B cell (primary cell): ENCODE measurements at regions of chr12 and their contacts with region 1.

Region 1: DNA sequence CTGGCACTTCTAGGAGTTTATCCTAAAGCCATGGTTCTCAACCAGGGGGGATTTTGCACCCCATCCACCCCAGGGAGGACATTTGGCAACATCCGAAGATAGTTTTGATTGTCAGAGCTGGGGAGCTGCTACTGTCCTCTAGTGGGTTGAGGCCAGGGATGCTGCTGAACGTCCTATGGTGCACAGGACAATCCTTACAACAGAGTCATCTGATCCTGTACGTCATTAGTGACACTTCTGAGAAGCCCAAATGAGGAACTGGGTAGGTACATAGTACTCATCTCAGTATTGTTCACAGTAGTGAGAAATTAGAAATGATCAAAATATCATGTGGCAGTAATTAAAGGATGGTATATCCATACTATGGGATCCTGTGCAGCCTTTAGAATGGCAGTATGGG is 185.1 kb downstream of the CHST11 start:
- DNase-seq: peak; percentile 86
- ATAC-seq: peak; percentile 79
- H3K4me3 ChIP-seq: no peak overlapping the region
- H3K4me3 Mint-ChIP-seq: peak overlapping the region; percentile 42
- H3K27ac ChIP-seq: peak overlapping the region; percentile 88 to 96
- H3K27ac Mint-ChIP-seq: peak overlapping the region; percentile 91
- H3K4me1 ChIP-seq: peaks cover 43 to 57% of the 10 kb centered on the region in 2 donors
- H3K4me1 Mint-ChIP-seq: peaks cover 84% of the 10 kb centered on the region
- H3K27me3 ChIP-seq: no peaks in the 10 kb centered on the region
- H3K27me3 Mint-ChIP-seq: no peaks in the 10 kb centered on the region
- CTCF ChIP-seq: peak; percentile 57

Region 2: DNA sequence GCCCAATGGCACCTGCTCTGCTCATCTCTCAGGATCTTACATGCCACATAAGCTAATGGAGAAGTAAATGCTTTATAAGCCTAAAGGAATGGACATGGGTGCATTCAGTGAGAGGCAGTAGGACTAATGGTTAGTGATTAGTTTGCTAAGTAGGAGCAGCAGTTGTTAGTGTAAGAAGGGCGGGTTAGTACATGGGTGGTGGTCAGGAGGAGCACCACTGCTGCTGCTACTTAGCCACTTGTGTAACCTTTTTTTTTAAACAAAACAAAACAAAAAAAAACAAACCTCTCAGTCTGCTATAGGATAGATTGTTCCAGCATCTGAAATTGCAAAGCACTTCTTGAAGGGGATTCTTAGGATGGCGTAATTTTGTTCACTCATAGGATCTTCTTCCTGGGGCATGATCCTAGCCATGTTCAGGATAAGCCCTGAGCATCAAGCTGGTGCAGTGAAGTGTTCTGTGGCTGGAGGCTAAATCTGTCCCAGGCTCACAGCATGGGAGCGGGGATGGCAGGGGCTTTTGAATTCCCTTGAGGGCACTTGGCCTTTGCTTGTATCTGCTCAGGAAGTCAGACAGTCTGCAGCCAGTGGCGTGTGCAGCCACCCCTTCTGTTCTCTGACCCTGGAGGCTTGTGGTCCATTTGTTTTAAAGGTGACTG is 121.5 kb before region 1 on chr12:
- CTCF ChIA-PET with region 1: no interaction called
- POLR2A ChIA-PET with region 1: interaction called, 4 read pairs
- intact Hi-C with region 1: loop called (anchors 2 kb)
- DNase-seq: peak; percentile 80
- ATAC-seq: peak; percentile 80
- H3K4me3 ChIP-seq: peak overlapping the region in 3 of 5 experiments; percentile 5 to 40 (median 12)
- H3K4me3 Mint-ChIP-seq: peak overlapping the region; percentile 62
- H3K27ac ChIP-seq: peak overlapping the region; percentile 8 to 64
- H3K27ac Mint-ChIP-seq: peak overlapping the region; percentile 85
- H3K4me1 ChIP-seq: peaks cover 75% of the 10 kb centered on the region in 2 donors
- H3K4me1 Mint-ChIP-seq: peaks cover 92% of the 10 kb centered on the region
- H3K27me3 ChIP-seq: no peaks in the 10 kb centered on the region
- H3K27me3 Mint-ChIP-seq: no peaks in the 10 kb centered on the region
- CTCF ChIP-seq: no peak

Region 3: GRCh38 chr12:104582739-104583138 is 59.1 kb before region 1 on chr12:
- CTCF ChIA-PET with region 1: interaction called, 7 read pairs
- POLR2A ChIA-PET with region 1: interaction called, 5 read pairs
- intact Hi-C with region 1: loop called (anchors 1 kb)
- DNase-seq: peak; percentile 90
- ATAC-seq: peak; percentile 91
- H3K4me3 ChIP-seq: peak overlapping the region in 3 of 5 experiments; percentile 4 to 30 (median 26)
- H3K4me3 Mint-ChIP-seq: peak overlapping the region; percentile 59
- H3K27ac ChIP-seq: peak overlapping the region; percentile 72 to 93
- H3K27ac Mint-ChIP-seq: peak overlapping the region; percentile 69
- H3K4me1 ChIP-seq: peaks cover 75 to 80% of the 10 kb centered on the region in 2 donors
- H3K4me1 Mint-ChIP-seq: peaks cover 88% of the 10 kb centered on the region
- H3K27me3 ChIP-seq: no peaks in the 10 kb centered on the region
- H3K27me3 Mint-ChIP-seq: no peaks in the 10 kb centered on the region
- CTCF ChIP-seq: no peak

Region 4: GRCh38 chr12:104671407-104672098 is 29.7 kb after region 1 on chr12:
- CTCF ChIA-PET with region 1: no interaction called
- POLR2A ChIA-PET with region 1: interaction called, 3 read pairs
- intact Hi-C with region 1: loop called (anchors 1 kb)
- DNase-seq: peak; percentile 75
- ATAC-seq: peak; percentile 73
- H3K4me3 ChIP-seq: no peak overlapping the region
- H3K4me3 Mint-ChIP-seq: peak overlapping the region; percentile 61
- H3K27ac ChIP-seq: peak overlapping the region in 1 of 2 donors; percentile 48
- H3K27ac Mint-ChIP-seq: peak overlapping the region; percentile 71
- H3K4me1 ChIP-seq: peaks cover 39 to 62% of the 10 kb centered on the region in 2 donors
- H3K4me1 Mint-ChIP-seq: peaks cover 79% of the 10 kb centered on the region
- H3K27me3 ChIP-seq: no peaks in the 10 kb centered on the region
- H3K27me3 Mint-ChIP-seq: no peaks in the 10 kb centered on the region
- CTCF ChIP-seq: no peak

Region 5: GRCh38 chr12:104750061-104750460 is 108.2 kb after region 1 on chr12:
- CTCF ChIA-PET with region 1: no interaction called
- POLR2A ChIA-PET with region 1: no interaction called
- intact Hi-C with region 1: loop called (anchors 2 kb)
- DNase-seq: peak; percentile 62
- ATAC-seq: peak; percentile 59
- H3K4me3 ChIP-seq: no peak overlapping the region
- H3K4me3 Mint-ChIP-seq: peak overlapping the region; percentile 74
- H3K27ac ChIP-seq: no peak overlapping the region
- H3K27ac Mint-ChIP-seq: peak overlapping the region; percentile 79
- H3K4me1 ChIP-seq: peaks cover 25 to 33% of the 10 kb centered on the region in 2 donors
- H3K4me1 Mint-ChIP-seq: peaks cover 77% of the 10 kb centered on the region
- H3K27me3 ChIP-seq: no peaks in the 10 kb centered on the region
- H3K27me3 Mint-ChIP-seq: no peaks in the 10 kb centered on the region
- CTCF ChIP-seq: no peak

Region 6: GRCh38 chr12:105253882-105254513 is 612.1 kb after region 1 on chr12:
- CTCF ChIA-PET with region 1: no interaction called
- POLR2A ChIA-PET with region 1: no interaction called
- intact Hi-C with region 1: no loop called
- DNase-seq: no peak
- ATAC-seq: no peak
- H3K4me3 ChIP-seq: no peak overlapping the region
- H3K4me3 Mint-ChIP-seq: no peak overlapping the region
- H3K27ac ChIP-seq: no peak overlapping the region
- H3K27ac Mint-ChIP-seq: no peak overlapping the region
- H3K4me1 ChIP-seq: no peaks in the 10 kb centered on the region
- H3K4me1 Mint-ChIP-seq: peaks cover 3% of the 10 kb centered on the region
- H3K27me3 ChIP-seq: no peaks in the 10 kb centered on the region
- H3K27me3 Mint-ChIP-seq: no peaks in the 10 kb centered on the region
- CTCF ChIP-seq: no peak